ENCODE measurements at regions of chr12 and their contacts with region 1.

Region 1: DNA sequence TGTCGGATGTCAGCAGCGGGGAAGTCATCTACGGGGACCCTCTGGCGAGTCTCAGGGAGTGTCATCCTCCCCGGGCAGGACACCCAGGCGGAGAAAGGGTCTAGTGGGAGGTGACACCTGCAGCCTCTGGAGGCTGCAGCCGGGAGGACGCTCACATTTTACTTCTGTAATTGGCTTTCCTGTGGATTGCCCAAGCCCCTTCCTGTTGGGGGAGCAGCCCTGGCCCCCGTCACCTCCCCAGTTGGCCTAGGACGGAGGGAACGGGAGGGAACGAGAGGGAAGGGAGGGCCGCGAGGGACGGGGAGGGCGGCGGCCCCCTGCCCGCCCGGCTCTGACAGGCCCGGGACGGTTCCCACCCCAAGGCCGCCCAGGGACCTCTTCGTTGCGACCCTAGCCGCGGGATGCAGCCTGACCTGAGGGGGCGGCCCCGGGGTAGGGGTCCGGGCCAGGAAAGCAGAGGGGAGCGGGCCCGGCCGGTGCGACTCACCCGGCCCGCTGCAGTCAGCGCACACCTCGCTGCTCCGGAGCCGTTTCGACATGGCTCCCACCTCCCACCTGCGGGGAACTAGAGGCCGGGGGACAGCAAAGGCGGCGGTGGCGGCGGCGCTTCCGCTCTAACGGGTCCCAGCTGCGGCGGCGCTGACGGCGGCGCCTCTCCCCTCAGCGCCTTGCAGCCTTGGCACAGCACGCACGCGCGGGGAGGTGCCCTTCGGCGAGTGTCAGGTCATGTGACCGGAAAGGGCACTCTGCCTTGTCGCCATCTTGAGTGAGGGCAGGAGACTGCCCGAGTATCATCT is at the start of gene GIT2:
- DNase-seq: peak; percentile 94 to 95
- H3K4me3 ChIP-seq: peak within 1 kb of the TSS; percentile 93 to 100
- H3K27ac ChIP-seq: peak within 1 kb of the TSS; percentile 76 to 78
- H3K4me1 ChIP-seq: peaks cover 0 to 42% (median 23%) of the 10 kb centered on the region in 4 donors
- H3K27me3 ChIP-seq: no peaks in the 10 kb centered on the region
- CTCF ChIP-seq: no peak

Region 2: DNA sequence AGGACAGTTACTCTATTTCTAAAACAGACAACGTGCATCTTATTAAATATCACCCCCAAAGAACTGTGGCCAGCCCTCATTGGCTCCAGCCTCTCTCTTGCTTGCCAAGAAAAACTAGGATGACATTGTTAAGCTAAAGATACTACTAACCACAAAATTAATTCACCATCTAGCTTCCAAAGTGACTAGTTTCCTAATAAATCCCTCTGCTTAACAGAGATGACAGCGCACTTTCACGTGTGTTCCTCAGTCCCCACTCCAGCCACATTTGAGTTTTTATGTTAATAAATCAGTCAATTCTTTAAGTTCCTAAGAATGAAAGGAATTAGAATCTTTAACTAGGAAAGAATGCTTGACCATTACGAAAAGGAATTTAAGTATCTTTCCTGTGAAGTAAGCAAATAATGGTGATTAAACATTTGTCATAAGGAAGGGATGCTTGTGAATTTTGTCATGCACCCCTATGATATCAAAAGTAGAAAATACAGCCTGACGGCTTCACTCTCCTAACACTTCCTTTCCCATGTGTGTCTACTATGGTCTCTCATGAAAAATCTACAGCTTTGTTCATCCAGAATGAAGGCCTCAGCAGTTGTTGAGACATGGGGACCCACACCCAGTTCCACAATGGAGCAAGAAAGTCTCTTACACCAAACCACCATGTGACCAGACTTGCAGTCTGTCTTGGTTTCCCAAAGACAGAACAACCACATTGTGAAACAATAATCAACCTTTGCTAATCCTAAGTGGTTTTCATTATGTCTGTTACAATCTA is 1272.7 kb before region 1 on chr12:
- intact Hi-C with region 1: no loop called
- DNase-seq: peak in 1 of 2 donors; percentile 66
- H3K4me3 ChIP-seq: no peak overlapping the region
- H3K27ac ChIP-seq: peak overlapping the region; percentile 66 to 100
- H3K4me1 ChIP-seq: peaks cover 0 to 100% (median 53%) of the 10 kb centered on the region in 4 donors
- H3K27me3 ChIP-seq: no peaks in the 10 kb centered on the region
- CTCF ChIP-seq: no peak

Region 3: GRCh38 chr12:109573029-109573913 is 422.6 kb before region 1 on chr12 and contains the starts of genes MMAB and MVK:
- intact Hi-C with region 1: loop called (anchors 5 kb)
- DNase-seq: peak; percentile 99 to 100
- H3K4me3 ChIP-seq: peak within 1 kb of the TSS; percentile 73 to 96
- H3K27ac ChIP-seq: peak within 1 kb of the TSS; percentile 78 to 83
- H3K4me1 ChIP-seq: peaks cover 0 to 20% (median 19%) of the 10 kb centered on the region in 4 donors
- H3K27me3 ChIP-seq: no peaks in the 10 kb centered on the region
- CTCF ChIP-seq: no peak

Region 4: DNA sequence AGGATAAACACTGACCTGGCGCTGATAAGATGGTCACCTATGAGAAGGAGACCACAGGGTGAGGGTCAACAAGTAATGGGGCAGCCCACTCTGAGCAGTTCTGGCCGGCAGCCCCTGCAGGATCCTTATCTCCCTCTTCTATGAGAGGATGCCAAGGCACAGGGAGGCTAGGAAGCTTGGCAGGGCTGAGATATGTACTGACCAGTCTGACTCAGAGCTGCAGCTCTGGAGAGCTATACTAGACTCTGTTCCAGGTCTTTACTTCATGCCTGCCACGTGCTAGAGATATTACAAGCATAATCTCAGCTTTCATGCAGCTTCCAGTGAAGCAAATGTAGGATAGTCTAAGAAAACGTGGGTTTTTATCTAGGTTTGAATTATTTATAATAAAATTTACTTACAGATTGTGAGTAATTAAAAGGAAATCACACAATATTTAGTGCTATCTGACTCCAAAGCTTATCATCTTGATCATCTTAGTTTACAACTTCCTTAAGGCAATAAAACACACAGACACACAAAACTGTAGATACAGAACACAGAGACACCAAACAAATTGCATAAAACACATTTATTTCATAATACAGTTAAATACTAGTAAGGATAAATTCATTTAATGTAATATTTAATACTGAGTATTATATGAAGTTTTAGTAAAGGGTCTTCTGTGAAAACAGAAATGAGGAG is 32.0 kb before region 1 on chr12:
- intact Hi-C with region 1: no loop called
- DNase-seq: peak in 1 of 2 donors; percentile 23
- H3K4me3 ChIP-seq: no peak overlapping the region
- H3K27ac ChIP-seq: no peak overlapping the region
- H3K4me1 ChIP-seq: peaks cover 0 to 3% (median 0%) of the 10 kb centered on the region in 4 donors
- H3K27me3 ChIP-seq: no peaks in the 10 kb centered on the region
- CTCF ChIP-seq: no peak

Measured in tibial artery (tissue), 4 donors.